ENCODE measurements at regions of chr6 and their contacts with region 1.

Region 1: GRCh38 chr6:169751242-169752073 is at the starts of genes DYNLT2 and ERMARD:
- DNase-seq: peak; percentile 93
- H3K4me3 Mint-ChIP-seq: peak within 1 kb of the TSS; percentile 91
- H3K27ac Mint-ChIP-seq: peak within 1 kb of the TSS; percentile 97
- H3K4me1 Mint-ChIP-seq: peaks cover 33% of the 10 kb centered on the region
- H3K27me3 Mint-ChIP-seq: no peaks in the 10 kb centered on the region
- total RNA-seq, gene DYNLT2: 2.9 to 3.1 TPM
- total RNA-seq, gene ERMARD: 21.1 to 22.8 TPM

Region 2: DNA sequence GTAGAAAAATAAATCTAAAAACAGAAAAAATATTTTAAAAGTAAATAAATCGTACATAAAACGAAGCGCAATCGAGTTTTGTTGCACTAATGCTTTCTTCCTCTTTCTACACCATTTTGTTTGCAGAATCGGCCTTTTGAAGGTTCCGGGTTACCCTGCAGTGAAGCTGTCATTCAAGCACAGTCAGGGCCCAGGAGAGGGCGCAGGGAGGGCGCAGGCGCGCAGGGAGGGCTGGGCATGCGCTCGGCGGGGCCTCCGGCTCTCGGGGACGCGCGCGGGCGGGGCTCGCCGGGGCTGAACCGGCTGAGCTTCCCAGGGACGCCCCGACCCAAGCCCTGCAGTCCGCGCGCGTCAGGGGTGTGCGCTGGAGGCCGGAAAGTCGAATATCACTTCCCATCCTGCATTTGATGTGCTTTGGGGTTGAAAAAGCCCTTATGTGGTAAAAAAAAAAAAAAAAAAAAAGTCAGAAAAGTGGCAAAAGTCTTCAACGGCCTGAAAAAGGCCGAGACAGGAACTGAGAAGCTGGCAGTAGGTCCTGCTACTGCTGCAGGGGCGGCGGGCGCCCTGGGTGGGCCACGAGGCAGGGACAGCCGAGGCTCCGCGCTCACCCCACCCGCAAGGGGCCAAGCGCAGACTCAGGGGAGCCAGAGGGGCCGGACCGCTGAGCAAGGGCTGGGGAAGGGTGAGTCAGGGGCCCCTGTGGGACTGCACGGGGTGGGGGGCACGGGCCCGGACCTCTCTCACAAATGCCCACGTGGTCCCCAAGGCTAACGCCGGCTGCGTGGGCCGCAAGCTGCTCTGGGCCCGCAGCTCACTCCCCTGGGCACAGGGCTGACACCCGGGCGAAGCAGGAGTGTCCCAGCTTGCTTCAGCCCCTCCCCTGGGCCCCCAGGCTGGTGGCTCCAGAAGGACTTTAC is 538.3 kb before region 1 on chr6:
- CTCF ChIA-PET with region 1: no interaction called
- intact Hi-C with region 1: loop called (anchors 5 kb)
- DNase-seq: peak; percentile 93
- H3K4me3 Mint-ChIP-seq: peak overlapping the region; percentile 61
- H3K27ac Mint-ChIP-seq: peak overlapping the region; percentile 79
- H3K4me1 Mint-ChIP-seq: peaks cover 8% of the 10 kb centered on the region
- H3K27me3 Mint-ChIP-seq: no peaks in the 10 kb centered on the region

Region 3: DNA sequence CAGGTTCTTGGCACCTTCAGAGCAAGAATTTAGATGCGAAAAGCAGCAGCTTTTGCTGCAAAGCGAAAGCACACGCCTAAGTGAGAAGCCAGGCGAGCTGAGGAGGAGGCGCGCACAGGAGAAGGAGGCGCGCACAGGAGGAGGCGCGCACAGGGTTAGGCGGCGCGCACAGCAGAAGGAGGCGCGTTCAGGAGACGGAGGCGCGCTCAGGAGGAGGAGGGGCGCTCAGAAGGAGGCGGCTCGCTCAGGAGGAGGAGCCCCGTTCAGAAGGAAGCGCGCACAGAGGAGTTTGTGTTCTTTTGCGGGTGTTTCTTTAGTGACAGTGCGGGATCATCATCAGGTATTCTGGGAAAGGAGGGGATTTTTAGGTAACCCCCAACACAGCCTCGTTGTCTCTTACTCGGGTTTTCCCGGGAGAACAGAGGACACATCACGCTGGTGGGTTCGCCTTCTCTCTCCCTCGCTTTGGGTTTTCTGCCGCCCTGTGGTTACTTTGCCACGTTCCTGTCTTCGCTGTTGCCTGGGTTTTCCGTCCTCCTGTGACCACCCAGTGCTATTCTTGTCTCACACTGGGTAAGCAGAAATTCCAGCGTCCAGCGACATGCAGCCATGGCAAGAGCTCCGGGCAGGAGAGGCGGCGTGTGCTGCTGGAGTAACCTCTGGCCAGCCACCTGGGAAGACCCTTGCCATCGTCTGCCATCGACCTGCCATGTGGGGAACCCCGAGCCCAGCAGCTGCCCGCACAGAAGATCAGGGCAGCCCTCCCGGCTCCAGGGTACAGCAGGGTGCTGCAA is 96.7 kb before region 1 on chr6:
- CTCF ChIA-PET with region 1: no interaction called
- intact Hi-C with region 1: loop called (anchors 1 kb)
- DNase-seq: peak; percentile 68
- H3K4me3 Mint-ChIP-seq: peak overlapping the region; percentile 79
- H3K27ac Mint-ChIP-seq: peak overlapping the region; percentile 25
- H3K4me1 Mint-ChIP-seq: peaks cover 3% of the 10 kb centered on the region
- H3K27me3 Mint-ChIP-seq: no peaks in the 10 kb centered on the region

Region 4: GRCh38 chr6:169701954-169702839 is 49.3 kb before region 1 on chr6 and contains the starts of genes C6orf120 and WDR27:
- CTCF ChIA-PET with region 1: no interaction called
- intact Hi-C with region 1: loop called (anchors 1 kb)
- DNase-seq: peak; percentile 97
- H3K4me3 Mint-ChIP-seq: peak within 1 kb of the TSS; percentile 86
- H3K27ac Mint-ChIP-seq: peak within 1 kb of the TSS; percentile 91
- H3K4me1 Mint-ChIP-seq: peaks cover 41% of the 10 kb centered on the region
- H3K27me3 Mint-ChIP-seq: no peaks in the 10 kb centered on the region
- total RNA-seq, gene C6orf120: 10.7 to 11.7 TPM
- total RNA-seq, gene WDR27: 37.9 to 38.3 TPM

Region 5: GRCh38 chr6:169723200-169723909 is 28.1 kb before region 1 on chr6:
- CTCF ChIA-PET with region 1: no interaction called
- intact Hi-C with region 1: loop called (anchors 1 kb)
- DNase-seq: peak; percentile 62
- H3K4me3 Mint-ChIP-seq: peak overlapping the region; percentile 84
- H3K27ac Mint-ChIP-seq: peak overlapping the region; percentile 94
- H3K4me1 Mint-ChIP-seq: peaks cover 43% of the 10 kb centered on the region
- H3K27me3 Mint-ChIP-seq: no peaks in the 10 kb centered on the region

Region 6: DNA sequence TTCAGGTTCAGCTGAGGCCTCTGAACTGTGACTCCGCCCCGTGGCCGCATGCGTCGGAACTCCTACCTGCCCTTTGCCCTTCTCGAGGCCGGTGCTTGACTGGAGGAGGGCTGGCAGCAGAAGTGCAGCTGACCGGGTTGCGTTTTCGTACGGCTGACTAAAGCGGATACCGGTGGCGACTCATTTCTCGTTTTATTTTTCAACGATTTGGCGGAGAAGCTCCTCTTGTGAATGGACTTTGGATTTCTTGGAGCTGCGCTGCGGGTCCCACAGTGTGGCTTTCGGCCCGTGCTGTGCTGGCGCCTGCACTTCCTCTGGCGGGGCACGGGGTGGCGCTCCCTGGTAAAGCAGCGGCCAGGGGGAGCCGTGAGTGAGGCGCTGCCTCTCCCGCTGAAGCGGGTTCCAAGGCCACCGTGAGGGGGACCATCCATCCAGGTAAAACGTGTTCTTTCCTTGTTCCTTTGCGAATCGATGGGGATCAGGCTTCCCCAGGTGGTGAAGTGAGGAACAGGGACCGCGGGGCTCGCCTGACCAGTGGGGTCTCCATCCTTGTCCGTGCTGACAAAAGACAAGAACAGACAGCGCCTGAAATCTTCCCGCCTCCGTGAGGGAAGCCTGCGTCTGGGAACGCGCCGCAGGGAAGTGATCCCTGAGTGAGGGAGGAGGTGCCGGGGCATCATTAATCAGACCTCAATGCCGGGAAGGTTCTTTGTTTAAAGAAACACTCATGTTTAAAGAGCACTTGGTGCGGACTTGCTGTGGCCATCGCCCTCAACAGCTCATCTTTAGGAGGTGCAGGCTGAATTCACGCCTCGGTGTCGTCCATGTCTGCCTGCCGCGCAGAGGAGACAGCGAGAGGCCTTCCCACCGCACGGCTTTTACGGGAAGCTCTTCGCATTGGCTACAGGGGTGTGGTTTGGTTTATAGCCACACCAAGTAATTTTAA is 38.8 kb after region 1 on chr6:
- CTCF ChIA-PET with region 1: interaction called, 4 read pairs
- intact Hi-C with region 1: loop called (anchors 2 kb)
- DNase-seq: peak; percentile 80
- H3K4me3 Mint-ChIP-seq: peak overlapping the region; percentile 79
- H3K27ac Mint-ChIP-seq: no peak overlapping the region
- H3K4me1 Mint-ChIP-seq: peaks cover 17% of the 10 kb centered on the region
- H3K27me3 Mint-ChIP-seq: peaks cover 24% of the 10 kb centered on the region

Region 7: GRCh38 chr6:170554013-170554795 is 802.7 kb after region 1 on chr6 and contains the start of gene TBP:
- CTCF ChIA-PET with region 1: no interaction called
- intact Hi-C with region 1: loop called (anchors 1 kb)
- DNase-seq: peak; percentile 98
- H3K4me3 Mint-ChIP-seq: no peak within 1 kb of the TSS
- H3K27ac Mint-ChIP-seq: no peak within 1 kb of the TSS
- H3K4me1 Mint-ChIP-seq: peaks cover 41% of the 10 kb centered on the region
- H3K27me3 Mint-ChIP-seq: no peaks in the 10 kb centered on the region
- total RNA-seq, gene TBP: 19.4 to 22.3 TPM